IMR-90 (cell line): ENCODE measurements at regions of chr1 and their contacts with region 1.

Region 1: GRCh38 chr1:85628791-85629531 is 48.4 kb downstream of the CCN1 start:
- DNase-seq: peak; percentile 95
- ATAC-seq: peak; percentile 89
- H3K4me3 ChIP-seq: 0 out of 2 replicates have a peak overlapping the region, but pooled peaks have one; percentile 0
- H3K27ac ChIP-seq: peak overlapping the region; percentile 96
- H3K4me1 ChIP-seq: peaks cover 13% of the 10 kb centered on the region
- H3K27me3 ChIP-seq: no peaks in the 10 kb centered on the region
- CTCF ChIP-seq: no peak
- POLR2A ChIP-seq: peak; percentile 34; the same call in 1 of the 2 replicates
- RAD21 ChIP-seq: no peak

Region 2: GRCh38 chr1:85504360-85504811 is 124.6 kb before region 1 on chr1:
- CTCF ChIA-PET with region 1: no interaction called
- POLR2A ChIA-PET with region 1: no interaction called
- dilution Hi-C with region 1: no loop called
- in situ Hi-C with region 1: no loop called
- intact Hi-C with region 1: no loop called
- DNase-seq: peak; percentile 49
- ATAC-seq: no peak
- H3K4me3 ChIP-seq: no peak overlapping the region
- H3K27ac ChIP-seq: no peak overlapping the region
- H3K4me1 ChIP-seq: peaks cover 6% of the 10 kb centered on the region
- H3K27me3 ChIP-seq: no peaks in the 10 kb centered on the region
- CTCF ChIP-seq: no peak
- POLR2A ChIP-seq: no peak
- RAD21 ChIP-seq: no peak

Region 3: DNA sequence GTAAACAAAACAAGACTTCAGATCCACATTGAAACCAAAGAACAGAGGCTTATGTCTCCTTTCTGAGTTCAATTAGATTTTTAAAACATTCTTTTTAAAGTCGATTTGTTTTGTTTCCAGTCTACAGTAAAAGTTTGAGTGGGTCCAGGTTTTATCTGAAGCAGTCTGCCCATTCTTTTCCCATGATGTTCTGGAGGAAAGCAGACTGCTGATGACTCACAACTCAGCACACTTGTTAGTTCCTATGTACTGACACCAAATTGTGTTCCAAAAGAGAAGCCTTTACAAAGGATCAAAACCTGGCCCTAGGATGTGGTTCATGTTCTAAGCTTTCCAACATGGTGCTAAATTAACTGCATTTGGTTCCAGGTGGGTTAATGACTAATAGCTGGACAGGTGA is 59.8 kb before region 1 on chr1:
- CTCF ChIA-PET with region 1: no interaction called
- POLR2A ChIA-PET with region 1: no interaction called
- dilution Hi-C with region 1: no loop called
- in situ Hi-C with region 1: no loop called
- intact Hi-C with region 1: no loop called
- DNase-seq: peak; percentile 90
- ATAC-seq: peak; percentile 66
- H3K4me3 ChIP-seq: no peak overlapping the region
- H3K27ac ChIP-seq: peak overlapping the region; percentile 81; the same call in 1 of the 2 replicates
- H3K4me1 ChIP-seq: peaks cover 34% of the 10 kb centered on the region
- H3K27me3 ChIP-seq: no peaks in the 10 kb centered on the region
- CTCF ChIP-seq: no peak
- POLR2A ChIP-seq: no peak
- RAD21 ChIP-seq: no peak

Region 4: DNA sequence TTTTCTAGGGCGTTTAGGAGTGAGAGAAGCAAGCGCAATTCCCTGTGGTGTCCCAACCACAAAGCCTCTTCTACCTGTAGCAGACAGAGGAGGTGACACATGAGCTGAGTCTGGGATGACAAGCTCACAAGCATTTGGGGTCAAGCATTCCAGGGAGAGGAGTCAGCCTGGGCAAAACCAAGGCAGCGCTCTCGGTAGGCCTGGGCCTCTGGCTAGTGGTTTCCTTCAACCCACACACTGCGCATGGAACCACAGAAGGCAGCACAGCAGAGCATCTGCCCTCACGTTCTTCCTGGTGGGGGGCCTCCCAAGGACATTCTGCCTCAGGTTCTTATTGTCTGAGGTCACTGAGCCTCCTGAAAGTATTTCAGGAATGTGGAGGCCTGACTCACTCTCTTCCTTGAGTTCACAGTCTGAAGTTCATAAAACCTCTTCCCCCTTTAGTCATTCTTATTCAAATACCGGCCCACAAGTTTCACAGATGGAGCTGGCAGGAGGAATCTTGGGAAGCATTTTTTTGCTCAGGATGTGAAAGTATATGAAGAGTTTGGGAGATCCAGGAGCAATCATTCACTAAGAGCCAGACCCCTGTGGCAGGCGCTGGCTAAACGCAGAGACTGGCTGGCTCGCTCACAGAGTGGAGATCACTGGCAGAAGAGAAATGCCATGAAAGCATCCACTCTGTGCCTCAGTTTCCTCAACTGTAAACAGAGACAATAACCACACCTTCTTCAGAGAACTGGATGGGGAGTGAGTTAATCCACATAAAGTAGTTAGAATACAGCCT is 21.6 kb before region 1 on chr1:
- CTCF ChIA-PET with region 1: interaction called, 12 read pairs
- POLR2A ChIA-PET with region 1: interaction called, 18 read pairs
- dilution Hi-C with region 1: no loop called
- in situ Hi-C with region 1: no loop called
- intact Hi-C with region 1: loop called (anchors 1 kb)
- DNase-seq: peak; percentile 100
- ATAC-seq: peak; percentile 76
- H3K4me3 ChIP-seq: no peak overlapping the region
- H3K27ac ChIP-seq: peak overlapping the region; percentile 91
- H3K4me1 ChIP-seq: peaks cover 39% of the 10 kb centered on the region
- H3K27me3 ChIP-seq: no peaks in the 10 kb centered on the region
- CTCF ChIP-seq: no peak
- POLR2A ChIP-seq: peak; percentile 68
- RAD21 ChIP-seq: no peak

Region 5: DNA sequence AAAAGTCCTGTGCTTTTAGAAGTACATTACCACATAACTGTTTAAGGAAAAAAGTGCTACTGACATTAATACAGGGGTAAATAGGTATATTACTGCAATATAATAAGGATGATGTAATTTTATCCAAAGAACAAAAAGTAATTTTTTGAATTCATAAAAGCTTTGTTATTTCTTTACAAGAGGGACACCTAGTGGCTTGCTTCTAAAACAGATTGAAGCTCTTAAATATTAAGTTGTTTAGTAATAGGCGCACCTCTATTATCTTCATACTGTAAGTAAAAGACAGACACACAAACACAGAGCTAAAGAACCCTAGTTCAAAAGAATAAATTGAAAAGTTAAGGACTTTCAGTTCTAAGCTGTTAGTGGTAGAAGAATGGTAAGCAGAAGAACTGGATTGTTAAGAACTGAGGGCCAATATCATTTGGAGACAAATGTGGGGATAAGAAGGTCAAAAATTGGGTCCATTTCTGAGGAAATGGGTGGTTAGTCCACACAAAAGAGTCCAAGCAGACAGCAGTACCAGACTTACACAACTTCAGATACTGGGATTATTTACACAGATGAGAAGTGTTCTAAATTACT is 63.9 kb after region 1 on chr1:
- CTCF ChIA-PET with region 1: interaction called, 11 read pairs
- POLR2A ChIA-PET with region 1: no interaction called
- dilution Hi-C with region 1: no loop called
- in situ Hi-C with region 1: no loop called
- intact Hi-C with region 1: loop called (anchors 2 kb)
- DNase-seq: peak; percentile 78
- ATAC-seq: peak; percentile 74
- H3K4me3 ChIP-seq: no peak overlapping the region
- H3K27ac ChIP-seq: no peak overlapping the region
- H3K4me1 ChIP-seq: no peaks in the 10 kb centered on the region; the same call in 1 of the 2 replicates
- H3K27me3 ChIP-seq: no peaks in the 10 kb centered on the region
- CTCF ChIP-seq: peak; percentile 67
- POLR2A ChIP-seq: no peak
- RAD21 ChIP-seq: peak; percentile 69